Dorsolateral prefrontal cortex (tissue), 120 donors: ENCODE measurements at regions of chr3 and their contacts with region 1.

Region 1: DNA sequence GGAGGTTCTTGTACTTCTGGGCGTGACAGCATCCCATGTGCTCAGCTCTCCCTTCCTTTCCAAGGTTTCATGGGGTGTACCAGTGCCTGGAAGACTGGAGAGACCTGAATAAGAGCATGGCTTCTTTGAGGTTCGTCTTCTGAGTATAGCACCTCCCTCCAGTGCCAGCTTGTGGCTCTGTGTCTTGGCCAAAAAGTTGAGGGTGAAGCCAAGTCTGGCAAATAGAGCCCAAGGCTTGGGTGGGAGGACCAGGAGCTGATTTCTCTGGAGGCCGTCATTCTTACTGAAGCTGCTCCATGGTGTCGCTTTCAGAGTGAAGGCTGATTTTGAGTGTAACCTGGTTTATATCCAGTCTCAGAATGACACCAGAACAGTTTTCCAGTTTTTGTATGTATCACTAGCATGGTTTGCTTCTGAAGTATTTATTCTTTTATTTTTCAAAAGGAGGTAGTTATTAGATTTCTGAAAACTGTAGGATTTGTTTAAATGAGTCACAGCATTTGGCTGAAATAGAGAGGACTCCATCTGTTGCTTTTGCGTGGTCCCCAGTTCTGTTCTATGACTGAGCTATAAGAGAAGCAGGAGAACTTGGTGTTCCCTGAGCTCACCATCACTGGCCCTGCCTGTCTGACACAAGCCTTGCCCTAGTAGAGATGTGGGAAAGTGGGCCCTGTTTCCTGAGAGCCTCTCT is 47.2 kb downstream of the BSN start:
- DNase-seq: peak in 4 of 10 donors; percentile 38 to 71 (median 58)
- H3K4me3 ChIP-seq: no peak overlapping the region
- H3K27ac ChIP-seq: peak overlapping the region in 55 of 59 donors; percentile 27 to 94 (median 79)
- H3K27me3 ChIP-seq: no peaks in the 10 kb centered on the region
- CTCF ChIP-seq: no peak

Region 2: GRCh38 chr3:49120438-49121131 is 480.9 kb before region 1 on chr3 and contains the start of gene USP19:
- intact Hi-C with region 1: no loop called
- DNase-seq: peak; percentile 93 to 97 (median 95)
- H3K4me3 ChIP-seq: peak within 1 kb of the TSS; percentile 51 to 100 (median 96)
- H3K27ac ChIP-seq: peak within 1 kb of the TSS; percentile 68 to 98 (median 94)
- H3K27me3 ChIP-seq: no peaks in the 10 kb centered on the region
- CTCF ChIP-seq: peak in 27 of 56 donors; percentile 6 to 52 (median 26)
- total RNA-seq, gene USP19: 46.6 to 83.3 (median 64.9) TPM

Region 3: DNA sequence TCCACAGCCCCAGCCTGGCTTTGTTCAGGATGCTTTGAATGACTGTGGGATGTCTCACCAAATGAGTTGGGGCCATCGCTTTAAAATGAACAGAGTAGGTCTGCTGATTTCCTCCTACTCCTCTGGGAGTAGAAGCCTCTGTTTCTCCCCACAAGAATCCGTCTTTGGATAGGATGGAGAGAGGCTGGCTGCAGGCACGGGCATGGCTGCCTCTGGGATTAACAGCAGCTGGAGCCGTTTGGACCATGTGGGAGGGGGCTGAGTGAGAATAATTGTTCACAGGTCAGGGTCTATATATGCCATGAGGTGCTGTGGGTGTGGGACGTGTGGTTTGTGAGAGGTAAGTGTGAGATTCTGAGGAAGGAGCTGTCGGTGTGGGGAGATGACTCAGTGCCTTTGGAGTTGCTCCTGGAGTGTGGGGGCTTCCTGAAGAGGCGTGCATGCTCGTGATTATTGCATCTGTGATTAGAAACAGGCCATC is 24.6 kb after region 1 on chr3:
- intact Hi-C with region 1: loop called in 1 of 2 experiments (anchors 1 kb)
- DNase-seq: peak in 6 of 10 donors; percentile 39 to 81 (median 68)
- H3K4me3 ChIP-seq: no peak overlapping the region
- H3K27ac ChIP-seq: peak overlapping the region in 46 of 59 donors; percentile 5 to 89 (median 64)
- H3K27me3 ChIP-seq: no peaks in the 10 kb centered on the region
- CTCF ChIP-seq: no peak

Region 4: GRCh38 chr3:49719214-49719884 is 117.8 kb after region 1 on chr3 and contains the start of gene AMIGO3:
- intact Hi-C with region 1: no loop called
- DNase-seq: peak; percentile 95 to 99 (median 97)
- H3K4me3 ChIP-seq: peak within 1 kb of the TSS; percentile 40 to 85 (median 65)
- H3K27ac ChIP-seq: peak within 1 kb of the TSS in 41 of 59 donors; percentile 4 to 82 (median 50)
- H3K27me3 ChIP-seq: no peaks in the 10 kb centered on the region
- CTCF ChIP-seq: peak in 52 of 56 donors; percentile 20 to 69 (median 46)
- total RNA-seq, gene AMIGO3: 0.22 to 1.6 (median 0.32) TPM in 13 of 120 experiments, not detected in the others